IMR-90 (cell line): ENCODE measurements at regions of chr11 and their contacts with region 1.

Region 1: DNA sequence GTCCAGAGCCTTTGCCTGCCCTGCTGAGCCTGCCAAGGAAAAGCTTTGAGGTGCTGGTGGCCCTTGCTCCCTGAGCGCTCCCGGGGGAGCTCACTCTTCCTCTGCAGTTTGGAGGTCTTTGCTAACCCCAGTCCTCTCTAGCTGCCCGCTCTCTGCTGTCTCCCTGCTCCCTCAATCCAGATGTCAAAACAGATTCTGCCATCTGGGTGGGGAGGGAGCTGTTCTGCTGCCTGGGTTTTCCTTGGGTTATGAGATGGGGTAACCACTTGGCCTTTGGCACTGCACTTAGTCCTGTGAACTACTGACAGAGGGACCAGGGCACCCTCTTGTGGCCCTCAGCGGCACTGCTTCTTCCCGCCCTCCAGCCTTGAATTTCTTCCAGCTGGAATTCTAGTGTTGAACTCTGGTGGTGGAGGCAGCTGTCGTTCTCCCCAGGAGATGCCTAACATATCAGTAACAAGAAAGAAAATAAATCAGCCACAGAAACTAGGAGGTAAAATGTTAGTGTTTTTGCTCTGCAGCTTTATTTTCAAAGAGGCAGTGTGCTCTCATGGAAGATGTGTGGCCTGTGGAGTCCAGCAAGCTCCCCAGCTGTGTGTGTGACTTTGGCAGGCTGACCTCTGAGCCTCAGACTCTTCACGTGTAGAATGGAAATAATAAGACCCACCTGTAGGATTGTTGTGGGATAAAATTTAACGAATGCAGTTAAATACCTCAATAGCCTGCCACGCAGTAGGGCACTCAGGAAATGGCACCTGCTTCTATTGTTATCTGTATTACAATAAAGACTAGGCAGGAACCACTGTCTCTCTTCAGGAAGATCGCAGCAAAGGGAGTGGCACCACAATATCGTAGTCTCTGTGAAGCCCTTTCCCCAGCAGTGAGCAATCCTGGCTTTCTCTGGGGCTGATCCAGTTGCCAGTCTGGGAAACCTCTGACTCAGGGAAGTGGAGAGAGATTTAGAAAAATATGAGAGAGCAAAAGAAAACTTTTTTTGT is 23.4 kb downstream of the ARFGAP2 start:
- DNase-seq: peak; percentile 80
- ATAC-seq: peak; percentile 90
- H3K4me3 ChIP-seq: no peak overlapping the region
- H3K27ac ChIP-seq: no peak overlapping the region
- H3K4me1 ChIP-seq: peaks cover 14% of the 10 kb centered on the region
- H3K27me3 ChIP-seq: no peaks in the 10 kb centered on the region
- CTCF ChIP-seq: peak; percentile 98
- POLR2A ChIP-seq: no peak
- RAD21 ChIP-seq: peak; percentile 97

Region 2: DNA sequence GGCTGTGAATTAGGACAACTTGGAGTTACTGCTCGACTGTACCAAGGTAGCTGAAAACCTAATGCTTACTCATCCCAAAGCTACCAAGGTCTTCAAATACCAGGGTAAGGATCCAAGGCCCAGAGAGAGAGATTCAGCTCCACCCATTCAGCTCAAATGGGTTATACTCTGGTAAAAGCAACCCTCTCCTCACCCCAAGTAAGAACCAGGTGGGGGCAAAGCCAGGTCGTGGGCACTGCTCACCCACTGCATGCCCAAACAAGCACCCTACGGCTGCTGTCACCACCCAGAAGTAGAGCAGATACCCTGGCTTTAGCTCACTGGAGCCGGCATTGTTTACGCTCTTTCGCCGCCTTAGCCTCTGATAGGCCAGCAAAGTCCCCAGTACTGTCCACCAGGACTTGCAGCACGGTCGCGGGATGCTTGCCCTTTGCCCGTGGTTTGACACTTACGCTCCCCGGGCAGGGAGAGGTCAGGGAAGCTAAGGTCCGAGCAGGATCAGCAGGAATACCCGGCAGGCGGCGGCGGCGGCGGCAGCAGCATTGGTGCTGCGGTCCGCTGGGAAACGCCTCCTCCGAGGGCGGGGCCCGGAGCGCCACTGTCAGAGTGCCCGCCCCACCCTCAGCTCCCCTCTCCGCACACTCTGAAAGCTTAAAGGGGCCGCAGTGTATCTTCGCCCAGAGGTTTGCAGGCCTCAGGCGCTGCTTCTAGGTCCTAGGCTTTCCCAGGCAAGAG is 326.8 kb before region 1 on chr11:
- CTCF ChIA-PET with region 1: interaction called, 3 read pairs
- POLR2A ChIA-PET with region 1: no interaction called
- dilution Hi-C with region 1: no loop called
- in situ Hi-C with region 1: no loop called
- intact Hi-C with region 1: loop called (anchors 5 kb)
- DNase-seq: peak; percentile 68
- ATAC-seq: peak; percentile 99
- H3K4me3 ChIP-seq: peak overlapping the region; percentile 85
- H3K27ac ChIP-seq: peak overlapping the region; percentile 70
- H3K4me1 ChIP-seq: peaks cover 6% of the 10 kb centered on the region
- H3K27me3 ChIP-seq: no peaks in the 10 kb centered on the region
- CTCF ChIP-seq: no peak
- POLR2A ChIP-seq: no peak
- RAD21 ChIP-seq: no peak

Region 3: DNA sequence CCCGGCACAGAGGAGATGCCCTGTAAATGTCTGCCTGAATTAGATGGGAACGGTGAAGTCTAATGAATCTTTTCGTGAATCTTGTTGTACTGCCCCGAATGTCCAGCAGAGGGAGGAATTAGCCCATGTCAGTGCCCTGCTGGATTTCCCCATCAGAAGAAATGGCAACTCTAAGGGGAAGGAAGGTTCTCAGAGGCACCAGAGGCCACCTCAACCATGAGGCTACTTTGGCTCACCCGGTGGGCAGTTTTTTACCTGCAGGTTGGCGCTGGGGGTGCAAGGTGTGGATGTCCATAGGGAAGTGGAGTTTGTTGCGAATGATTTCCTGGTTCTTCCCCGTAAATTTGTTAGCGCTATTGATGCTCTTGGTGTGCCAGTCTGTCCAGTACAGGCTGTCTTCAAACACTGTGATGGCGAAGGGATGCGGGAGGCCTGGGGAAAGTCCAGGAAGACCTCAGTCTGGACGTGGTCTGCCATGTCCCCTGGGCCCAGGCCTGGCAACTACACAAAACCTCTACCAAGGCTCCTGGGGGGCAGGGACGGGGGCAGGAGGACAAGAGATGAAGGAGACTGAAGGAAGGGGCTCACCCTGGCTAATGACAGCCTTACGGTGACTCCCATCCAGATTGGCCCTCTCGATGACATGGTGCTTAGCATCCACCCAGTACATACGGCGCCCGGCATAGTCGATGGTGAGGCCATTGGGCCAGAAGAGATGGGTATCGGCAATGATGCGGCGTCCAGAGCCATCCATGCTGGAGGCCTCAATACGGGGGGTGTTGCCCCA is 263.4 kb before region 1 on chr11:
- CTCF ChIA-PET with region 1: interaction called, 19 read pairs
- POLR2A ChIA-PET with region 1: no interaction called
- dilution Hi-C with region 1: no loop called
- in situ Hi-C with region 1: loop called (anchors 5 kb)
- intact Hi-C with region 1: loop called (anchors 1 kb)
- DNase-seq: peak; percentile 73
- ATAC-seq: peak; percentile 97
- H3K4me3 ChIP-seq: no peak overlapping the region
- H3K27ac ChIP-seq: no peak overlapping the region
- H3K4me1 ChIP-seq: no peaks in the 10 kb centered on the region; the same call in 1 of the 2 replicates
- H3K27me3 ChIP-seq: no peaks in the 10 kb centered on the region
- CTCF ChIP-seq: peak; percentile 97
- POLR2A ChIP-seq: 0 out of 2 replicates have a peak, but pooled peaks have one; percentile 45
- RAD21 ChIP-seq: peak; percentile 99

Region 4: GRCh38 chr11:46916286-46917108 is 236.8 kb before region 1 on chr11:
- CTCF ChIA-PET with region 1: interaction called, 18 read pairs
- POLR2A ChIA-PET with region 1: no interaction called
- dilution Hi-C with region 1: no loop called
- in situ Hi-C with region 1: loop called (anchors 10 kb)
- intact Hi-C with region 1: loop called (anchors 1 kb)
- DNase-seq: peak; percentile 78
- ATAC-seq: peak; percentile 52
- H3K4me3 ChIP-seq: peak overlapping the region; percentile 59
- H3K27ac ChIP-seq: no peak overlapping the region
- H3K4me1 ChIP-seq: peaks cover 13% of the 10 kb centered on the region
- H3K27me3 ChIP-seq: no peaks in the 10 kb centered on the region
- CTCF ChIP-seq: peak; percentile 34; the same call in 1 of the 2 replicates
- POLR2A ChIP-seq: no peak
- RAD21 ChIP-seq: no peak; the same call in 1 of the 2 replicates

Region 5: GRCh38 chr11:47056261-47056915 is 96.9 kb before region 1 on chr11:
- CTCF ChIA-PET with region 1: no interaction called
- POLR2A ChIA-PET with region 1: interaction called, 14 read pairs
- dilution Hi-C with region 1: no loop called
- in situ Hi-C with region 1: no loop called
- intact Hi-C with region 1: no loop called
- DNase-seq: peak; percentile 94
- ATAC-seq: peak; percentile 94
- H3K4me3 ChIP-seq: no peak overlapping the region
- H3K27ac ChIP-seq: no peak overlapping the region
- H3K4me1 ChIP-seq: peaks cover 5% of the 10 kb centered on the region
- H3K27me3 ChIP-seq: no peaks in the 10 kb centered on the region
- CTCF ChIP-seq: no peak
- POLR2A ChIP-seq: no peak
- RAD21 ChIP-seq: no peak

Region 6: DNA sequence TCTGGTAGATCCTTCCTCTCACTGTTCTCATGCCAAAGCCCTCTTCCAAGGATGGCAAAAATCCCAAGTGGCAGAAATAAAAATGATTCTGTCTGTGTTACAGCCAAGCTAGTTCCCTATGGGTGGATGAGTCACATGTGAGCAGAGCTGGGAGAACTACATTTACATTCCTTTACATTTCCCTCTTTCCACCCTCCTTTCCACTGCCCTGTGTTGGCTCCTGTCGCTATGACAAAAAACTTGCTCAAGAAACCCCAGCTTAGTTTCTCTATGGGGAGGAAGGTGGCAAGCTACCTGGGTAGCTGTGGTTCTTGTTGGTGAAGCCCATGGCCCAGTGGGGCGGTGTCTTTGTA is 51.4 kb after region 1 on chr11:
- CTCF ChIA-PET with region 1: no interaction called
- POLR2A ChIA-PET with region 1: no interaction called
- dilution Hi-C with region 1: no loop called
- in situ Hi-C with region 1: no loop called
- intact Hi-C with region 1: no loop called
- DNase-seq: peak; percentile 78
- ATAC-seq: peak; percentile 98
- H3K4me3 ChIP-seq: no peak overlapping the region
- H3K27ac ChIP-seq: no peak overlapping the region
- H3K4me1 ChIP-seq: no peaks in the 10 kb centered on the region; the same call in 1 of the 2 replicates
- H3K27me3 ChIP-seq: peaks cover 15% of the 10 kb centered on the region
- CTCF ChIP-seq: no peak
- POLR2A ChIP-seq: no peak
- RAD21 ChIP-seq: no peak